ENCODE measurements at regions of chr14 and their contacts with region 1.

Region 1: GRCh38 chr14:59275653-59276052 is 87.2 kb downstream of the DAAM1 start:
- DNase-seq: no peak
- H3K4me3 ChIP-seq: no peak overlapping the region
- H3K27ac ChIP-seq: peak overlapping the region; percentile 76 to 82
- H3K4me1 ChIP-seq: peaks cover 13 to 47% of the 10 kb centered on the region in 2 donors
- H3K27me3 ChIP-seq: no peaks in the 10 kb centered on the region
- CTCF ChIP-seq: no peak

Region 2: DNA sequence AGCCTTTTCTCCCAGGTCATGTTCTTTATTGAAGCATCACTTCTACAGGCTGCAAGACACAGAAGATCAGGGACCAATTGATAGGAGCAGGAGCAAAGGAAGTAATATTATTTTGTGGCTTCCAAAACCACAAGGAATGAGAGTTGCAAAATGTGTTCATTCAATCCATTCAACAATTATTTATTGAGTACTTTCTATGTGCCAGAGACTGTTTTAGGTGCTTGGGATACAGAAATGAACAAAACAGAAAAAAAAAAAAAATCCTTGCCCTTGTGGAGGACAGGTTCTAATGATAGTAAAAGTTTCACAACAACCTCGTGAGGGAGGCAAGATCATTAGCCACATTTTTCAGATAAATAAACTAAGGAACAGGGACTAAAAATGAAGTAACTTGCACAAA is 658.0 kb before region 1 on chr14:
- intact Hi-C with region 1: no loop called
- DNase-seq: no peak
- H3K4me3 ChIP-seq: no peak overlapping the region
- H3K27ac ChIP-seq: no peak overlapping the region
- H3K4me1 ChIP-seq: no peaks in the 10 kb centered on the region
- H3K27me3 ChIP-seq: no peaks in the 10 kb centered on the region
- CTCF ChIP-seq: no peak

Region 3: GRCh38 chr14:59240356-59240755 is 35.3 kb before region 1 on chr14:
- intact Hi-C with region 1: no loop called
- DNase-seq: no peak
- H3K4me3 ChIP-seq: no peak overlapping the region
- H3K27ac ChIP-seq: no peak overlapping the region
- H3K4me1 ChIP-seq: peaks cover 0 to 17% of the 10 kb centered on the region in 2 donors
- H3K27me3 ChIP-seq: no peaks in the 10 kb centered on the region
- CTCF ChIP-seq: no peak

Region 4: DNA sequence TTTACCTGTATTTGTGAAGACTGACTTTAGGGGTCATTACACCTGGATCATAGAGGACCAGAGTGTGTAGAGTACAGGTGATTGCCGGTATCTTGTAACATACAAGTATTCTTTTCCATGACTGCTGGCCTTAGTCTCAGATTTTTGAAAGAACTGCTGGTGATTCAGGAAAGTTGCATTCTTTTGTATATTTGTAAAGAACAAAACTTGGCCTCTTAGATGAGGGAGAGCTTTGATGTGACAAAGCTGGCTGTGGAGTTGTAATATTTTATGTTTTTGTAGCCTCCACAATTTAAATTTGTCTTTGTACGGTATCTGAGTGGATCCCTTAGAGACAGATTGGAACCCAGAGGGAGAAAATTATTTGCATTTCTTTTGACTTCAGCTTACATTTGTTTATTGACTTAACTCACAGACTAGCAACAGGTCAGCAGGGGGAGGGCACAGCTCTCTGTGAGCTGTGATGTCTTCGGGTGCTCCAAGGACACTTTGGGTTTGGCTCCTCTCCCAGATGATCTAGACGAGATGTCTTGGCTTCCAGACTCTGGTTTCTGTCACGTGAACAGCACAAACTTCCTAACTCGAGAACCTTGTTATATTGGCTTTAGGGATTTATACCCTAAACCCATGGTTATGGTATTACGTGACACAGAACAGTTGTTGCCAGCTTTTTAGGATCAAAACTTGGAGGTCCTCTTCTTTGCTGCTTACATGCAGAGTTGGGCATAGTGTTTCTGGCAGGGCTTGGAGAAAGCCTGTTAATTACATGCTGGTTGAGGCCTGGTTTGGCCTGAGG is 21.3 kb before region 1 on chr14:
- intact Hi-C with region 1: loop called (anchors 2 kb)
- DNase-seq: peak; percentile 24 to 77
- H3K4me3 ChIP-seq: peak overlapping the region in 1 of 2 donors; percentile 1
- H3K27ac ChIP-seq: peak overlapping the region; percentile 87 to 91
- H3K4me1 ChIP-seq: peaks cover 11 to 47% of the 10 kb centered on the region in 2 donors
- H3K27me3 ChIP-seq: no peaks in the 10 kb centered on the region
- CTCF ChIP-seq: no peak

Region 5: DNA sequence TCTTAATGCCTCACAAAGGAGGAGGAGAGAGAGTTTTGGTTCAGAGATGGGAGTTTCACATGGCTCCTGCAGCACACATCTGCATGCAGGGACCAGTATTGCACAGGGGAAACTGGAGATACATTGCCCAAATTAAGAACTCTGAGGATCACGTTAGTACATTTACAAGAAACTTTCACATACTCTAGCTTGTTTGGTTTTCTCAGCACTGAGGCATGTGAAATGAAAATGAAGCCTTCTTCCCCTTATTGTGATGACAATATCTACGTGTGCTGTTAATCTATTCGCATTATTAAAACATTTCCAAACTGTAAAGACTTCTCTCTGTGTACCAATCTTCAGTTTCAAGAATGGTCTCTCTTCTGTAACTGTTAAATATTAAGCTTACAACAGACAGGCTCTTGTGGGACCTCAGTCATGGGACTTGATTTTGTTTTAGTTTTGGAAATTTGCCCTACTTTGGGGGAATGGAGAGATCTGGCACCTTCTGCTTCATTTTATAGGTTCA is 37.5 kb after region 1 on chr14:
- intact Hi-C with region 1: loop called (anchors 5 kb)
- DNase-seq: no peak
- H3K4me3 ChIP-seq: no peak overlapping the region
- H3K27ac ChIP-seq: peak overlapping the region; percentile 46 to 55
- H3K4me1 ChIP-seq: peaks cover 11 to 43% of the 10 kb centered on the region in 2 donors
- H3K27me3 ChIP-seq: no peaks in the 10 kb centered on the region
- CTCF ChIP-seq: no peak

Region 6: DNA sequence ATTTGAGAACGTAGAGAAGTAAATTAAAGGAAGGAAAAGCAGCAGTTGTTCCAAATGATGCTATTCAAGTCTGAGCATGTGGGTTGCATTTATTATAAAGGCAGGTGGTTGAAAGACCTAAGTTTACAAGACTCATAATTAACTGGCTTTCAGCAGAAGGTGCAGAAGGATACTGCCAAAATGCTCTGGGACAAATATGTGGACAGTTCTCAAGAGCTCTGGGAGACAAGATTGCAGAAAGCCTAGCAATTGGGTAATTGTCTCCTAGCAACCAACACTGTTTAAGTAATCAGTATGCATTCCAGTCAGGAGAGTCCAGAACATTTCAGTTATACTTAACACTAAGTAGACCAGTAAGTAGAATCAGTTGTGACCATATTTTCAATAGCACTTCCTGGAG is 58.0 kb after region 1 on chr14:
- intact Hi-C with region 1: loop called (anchors 10 kb)
- DNase-seq: no peak
- H3K4me3 ChIP-seq: no peak overlapping the region
- H3K27ac ChIP-seq: peak overlapping the region; percentile 71 to 83
- H3K4me1 ChIP-seq: peaks cover 0 to 45% of the 10 kb centered on the region in 2 donors
- H3K27me3 ChIP-seq: no peaks in the 10 kb centered on the region
- CTCF ChIP-seq: no peak

Measured in ascending aorta (tissue), 2 donors.